Common myeloid progenitor, CD34-positive (primary cell): ENCODE measurements at regions of chr1 and their contacts with region 1.

Region 1: DNA sequence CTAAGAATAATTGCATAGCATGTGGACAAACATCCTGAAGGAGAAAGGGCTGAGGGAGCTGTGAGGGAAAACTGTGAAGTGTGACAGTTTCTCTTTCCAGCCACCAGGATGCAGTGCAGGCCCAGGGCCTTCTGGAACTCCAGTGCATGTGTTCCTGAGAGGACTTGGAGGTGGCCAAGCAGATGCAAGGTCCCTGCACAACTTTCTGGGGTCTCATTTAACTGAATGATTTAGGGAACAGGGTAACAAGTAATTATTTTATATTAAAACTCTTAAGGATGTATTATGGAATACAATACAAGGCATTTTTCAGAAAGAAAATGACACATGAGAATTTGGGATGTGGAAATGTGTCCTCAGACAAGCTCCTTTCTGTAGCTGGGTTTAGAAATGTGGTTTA is 61.2 kb upstream of the MCOLN3 start:
- DNase-seq: peak; percentile 74 to 87 (median 83)
- H3K4me3 ChIP-seq: no peak overlapping the region
- H3K27ac ChIP-seq: no peak overlapping the region
- H3K4me1 ChIP-seq: no peaks in the 10 kb centered on the region
- H3K27me3 ChIP-seq: no peaks in the 10 kb centered on the region

Region 2: GRCh38 chr1:85078903-85079302 is 30.6 kb before region 1 on chr1:
- CTCF ChIA-PET with region 1: no interaction called
- POLR2A ChIA-PET with region 1: no interaction called
- DNase-seq: peak in 2 of 3 donors; percentile 17 to 24
- H3K4me3 ChIP-seq: no peak overlapping the region
- H3K27ac ChIP-seq: no peak overlapping the region
- H3K4me1 ChIP-seq: no peaks in the 10 kb centered on the region
- H3K27me3 ChIP-seq: no peaks in the 10 kb centered on the region

Region 3: GRCh38 chr1:85093644-85094043 is 15.8 kb before region 1 on chr1:
- CTCF ChIA-PET with region 1: interaction called, 15 read pairs
- POLR2A ChIA-PET with region 1: no interaction called
- DNase-seq: no peak
- H3K4me3 ChIP-seq: no peak overlapping the region
- H3K27ac ChIP-seq: no peak overlapping the region
- H3K4me1 ChIP-seq: peaks cover 13 to 38% (median 22%) of the 10 kb centered on the region in 4 experiments
- H3K27me3 ChIP-seq: no peaks in the 10 kb centered on the region

Region 4: DNA sequence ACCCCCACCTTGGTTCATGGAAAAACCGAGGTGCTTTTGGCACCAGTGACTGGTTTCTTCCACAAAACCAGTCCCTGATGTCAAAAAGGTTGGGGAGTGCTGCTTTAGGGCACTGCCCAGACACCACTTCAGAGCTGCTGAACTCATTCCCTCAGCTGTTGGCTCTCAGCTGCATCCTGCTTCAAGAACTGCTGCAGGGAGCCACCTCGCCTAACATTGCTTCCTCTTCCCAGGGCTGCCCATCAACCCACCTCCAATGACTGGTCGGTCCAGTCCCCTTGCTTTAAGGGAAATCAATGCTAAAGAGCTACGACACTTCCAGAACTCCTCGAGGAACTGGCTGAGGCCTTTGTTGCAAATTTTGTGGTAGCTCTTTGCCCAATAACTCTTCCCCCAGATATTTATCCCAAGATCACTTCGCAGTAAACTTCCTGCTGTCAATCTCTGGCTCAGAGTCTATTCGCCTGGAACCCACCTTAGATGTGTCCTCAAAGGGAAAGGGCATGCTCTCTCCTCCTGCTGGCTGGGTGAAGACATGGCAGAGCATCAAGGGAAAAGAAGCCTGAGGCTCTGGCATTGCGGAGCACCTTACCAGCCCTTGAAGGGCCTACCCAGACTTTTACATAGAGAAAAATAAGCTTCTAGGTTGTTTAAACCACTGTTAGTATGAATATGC is 121.0 kb after region 1 on chr1:
- CTCF ChIA-PET with region 1: interaction called, 23 read pairs
- POLR2A ChIA-PET with region 1: interaction called, 3 read pairs
- DNase-seq: peak; percentile 22 to 37 (median 30)
- H3K4me3 ChIP-seq: no peak overlapping the region
- H3K27ac ChIP-seq: no peak overlapping the region
- H3K4me1 ChIP-seq: peaks cover 0 to 4% (median 0%) of the 10 kb centered on the region in 4 experiments
- H3K27me3 ChIP-seq: no peaks in the 10 kb centered on the region

Region 5: DNA sequence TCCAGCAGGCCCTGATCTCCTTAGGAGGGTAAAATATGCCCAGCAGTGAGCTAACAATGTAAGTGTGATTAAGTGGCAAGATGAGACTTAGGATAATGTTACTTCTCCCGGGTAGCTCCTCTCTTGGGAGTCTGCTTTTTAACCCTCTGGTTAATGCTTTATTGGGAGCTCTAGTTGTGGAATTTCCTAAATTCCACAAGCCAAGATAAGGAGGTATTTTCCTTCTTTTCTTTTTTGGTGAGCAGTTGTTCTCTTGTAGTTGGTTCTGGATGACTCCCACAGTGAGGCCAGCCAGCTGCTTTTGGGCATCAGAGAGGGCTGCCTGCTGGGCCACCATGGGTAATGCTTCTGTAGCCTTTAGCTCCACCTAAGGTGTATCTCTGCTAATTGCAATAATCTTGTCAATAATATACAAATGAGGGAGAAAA is 130.7 kb after region 1 on chr1:
- CTCF ChIA-PET with region 1: interaction called, 14 read pairs
- POLR2A ChIA-PET with region 1: interaction called, 3 read pairs
- DNase-seq: no peak
- H3K4me3 ChIP-seq: no peak overlapping the region
- H3K27ac ChIP-seq: no peak overlapping the region
- H3K4me1 ChIP-seq: peaks cover 0 to 17% (median 8%) of the 10 kb centered on the region in 4 experiments
- H3K27me3 ChIP-seq: no peaks in the 10 kb centered on the region

Region 6: GRCh38 chr1:85259118-85259911 is 149.8 kb after region 1 on chr1 and contains the start of gene C1orf52:
- CTCF ChIA-PET with region 1: interaction called, 159 read pairs
- POLR2A ChIA-PET with region 1: interaction called, 9 read pairs
- DNase-seq: peak; percentile 93 to 97 (median 96)
- H3K4me3 ChIP-seq: peak within 1 kb of the TSS; percentile 81 to 98 (median 94)
- H3K27ac ChIP-seq: peak within 1 kb of the TSS; percentile 72 to 93
- H3K4me1 ChIP-seq: peaks cover 8 to 18% (median 13%) of the 10 kb centered on the region in 4 experiments
- H3K27me3 ChIP-seq: no peaks in the 10 kb centered on the region